ENCODE measurements at regions of chr6 and their contacts with region 1.

Region 1: GRCh38 chr6:47407348-47408281 is 70.0 kb upstream of the CD2AP start:
- DNase-seq: no peak
- ATAC-seq: no peak
- H3K4me3 ChIP-seq: no peak overlapping the region
- H3K4me3 Mint-ChIP-seq: no peak overlapping the region
- H3K27ac ChIP-seq: no peak overlapping the region
- H3K27ac Mint-ChIP-seq: no peak overlapping the region
- H3K4me1 ChIP-seq: no peaks in the 10 kb centered on the region
- H3K4me1 Mint-ChIP-seq: no peaks in the 10 kb centered on the region
- H3K27me3 ChIP-seq: no peaks in the 10 kb centered on the region
- H3K27me3 Mint-ChIP-seq: no peaks in the 10 kb centered on the region
- CTCF ChIP-seq: no peak

Region 2: DNA sequence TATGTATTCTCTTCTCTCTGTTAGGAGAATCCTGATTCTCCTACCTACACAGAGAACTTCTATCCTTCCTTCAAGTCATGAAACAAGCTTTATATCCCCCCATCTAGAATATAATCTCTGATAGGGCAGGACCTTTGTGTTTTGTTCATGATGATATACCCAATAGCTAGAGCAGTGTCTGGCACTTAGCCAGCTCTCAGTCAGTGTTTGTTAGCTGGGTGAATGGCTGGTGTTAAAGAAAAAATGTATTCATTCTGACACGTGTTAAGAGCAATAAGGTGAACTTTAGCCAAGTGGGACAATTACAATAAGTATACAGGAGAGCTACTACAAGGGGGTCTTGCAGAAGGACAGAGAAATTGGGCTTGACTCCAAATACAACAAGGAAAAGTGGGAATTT is 63.6 kb before region 1 on chr6:
- CTCF ChIA-PET with region 1: no interaction called
- POLR2A ChIA-PET with region 1: no interaction called
- intact Hi-C with region 1: no loop called
- DNase-seq: no peak
- ATAC-seq: no peak
- H3K4me3 ChIP-seq: no peak overlapping the region
- H3K4me3 Mint-ChIP-seq: no peak overlapping the region
- H3K27ac ChIP-seq: no peak overlapping the region
- H3K27ac Mint-ChIP-seq: no peak overlapping the region
- H3K4me1 ChIP-seq: no peaks in the 10 kb centered on the region
- H3K4me1 Mint-ChIP-seq: no peaks in the 10 kb centered on the region
- H3K27me3 ChIP-seq: no peaks in the 10 kb centered on the region
- H3K27me3 Mint-ChIP-seq: no peaks in the 10 kb centered on the region
- CTCF ChIP-seq: no peak

Region 3: GRCh38 chr6:47376930-47377329 is 30.7 kb before region 1 on chr6:
- CTCF ChIA-PET with region 1: no interaction called
- POLR2A ChIA-PET with region 1: no interaction called
- intact Hi-C with region 1: no loop called
- DNase-seq: peak in 2 of 9 experiments; percentile 2 to 16
- ATAC-seq: no peak
- H3K4me3 ChIP-seq: no peak overlapping the region
- H3K4me3 Mint-ChIP-seq: no peak overlapping the region
- H3K27ac ChIP-seq: no peak overlapping the region
- H3K27ac Mint-ChIP-seq: no peak overlapping the region
- H3K4me1 ChIP-seq: no peaks in the 10 kb centered on the region
- H3K4me1 Mint-ChIP-seq: no peaks in the 10 kb centered on the region
- H3K27me3 ChIP-seq: no peaks in the 10 kb centered on the region
- H3K27me3 Mint-ChIP-seq: peaks cover 14% of the 10 kb centered on the region
- CTCF ChIP-seq: no peak

Region 4: GRCh38 chr6:47780510-47781356 is 373.1 kb after region 1 on chr6:
- CTCF ChIA-PET with region 1: interaction called, 47 read pairs
- POLR2A ChIA-PET with region 1: no interaction called
- intact Hi-C with region 1: no loop called
- DNase-seq: peak in 6 of 9 experiments; percentile 7 to 65 (median 41)
- ATAC-seq: peak; percentile 82
- H3K4me3 ChIP-seq: no peak overlapping the region
- H3K4me3 Mint-ChIP-seq: no peak overlapping the region
- H3K27ac ChIP-seq: no peak overlapping the region
- H3K27ac Mint-ChIP-seq: no peak overlapping the region
- H3K4me1 ChIP-seq: no peaks in the 10 kb centered on the region
- H3K4me1 Mint-ChIP-seq: peaks cover 5% of the 10 kb centered on the region
- H3K27me3 ChIP-seq: no peaks in the 10 kb centered on the region
- H3K27me3 Mint-ChIP-seq: peaks cover 2% of the 10 kb centered on the region
- CTCF ChIP-seq: no peak